ENCODE measurements at regions of chr17 and their contacts with region 1.

Region 1: GRCh38 chr17:43316522-43317142 is 82.2 kb upstream of the ARL4D start:
- DNase-seq: peak; percentile 39
- ATAC-seq: no peak
- H3K4me3 Mint-ChIP-seq: no peak overlapping the region
- H3K27ac Mint-ChIP-seq: no peak overlapping the region
- H3K4me1 Mint-ChIP-seq: peaks cover 19% of the 10 kb centered on the region
- H3K27me3 Mint-ChIP-seq: no peaks in the 10 kb centered on the region
- CTCF ChIP-seq: no peak

Region 2: DNA sequence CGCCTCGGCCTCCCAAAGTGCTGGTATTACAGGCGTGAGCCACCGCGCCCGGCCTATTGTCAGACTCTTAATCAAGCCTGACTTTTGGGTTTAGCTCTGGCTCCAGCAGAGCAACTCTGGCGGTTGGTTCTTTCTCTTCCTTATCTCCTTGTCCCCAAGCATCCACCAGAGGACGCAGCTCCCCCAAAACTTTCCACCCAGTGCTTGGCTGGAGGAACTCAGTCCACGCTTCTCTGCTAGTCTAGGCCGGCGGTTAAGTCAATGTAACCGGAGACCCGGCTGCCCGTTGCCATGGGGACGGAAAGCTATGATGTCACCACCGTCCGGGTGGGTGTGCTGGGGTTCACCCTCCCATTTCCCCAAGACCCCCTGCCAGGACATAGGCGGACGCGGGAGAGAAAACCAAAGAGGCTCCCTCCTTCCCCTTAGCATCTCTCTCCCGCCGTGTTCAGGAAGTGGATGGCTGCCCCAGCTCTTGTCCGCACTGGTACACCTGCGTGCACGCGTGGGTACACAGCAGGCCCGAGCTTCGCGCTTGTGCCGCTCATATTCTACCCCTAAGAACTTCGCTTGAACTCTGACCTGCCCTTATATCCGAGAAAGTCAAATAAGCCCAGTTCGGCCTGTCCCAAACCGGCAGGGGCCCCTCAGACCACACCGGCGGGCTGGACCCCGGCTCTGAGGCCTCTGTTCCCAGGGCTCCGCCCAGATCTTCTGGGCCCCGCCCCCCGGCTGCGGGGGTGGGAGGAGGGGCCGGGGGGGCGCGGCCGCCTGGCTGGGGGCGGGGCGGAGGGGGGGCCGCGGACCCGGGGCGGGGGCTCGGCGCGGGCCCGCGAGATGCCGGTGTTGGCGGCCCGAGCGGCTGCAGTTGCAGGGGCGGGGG is 292.0 kb before region 1 on chr17 and contains the start of gene RND2:
- CTCF ChIA-PET with region 1: no interaction called
- POLR2A ChIA-PET with region 1: interaction called, 17 read pairs
- intact Hi-C with region 1: loop called (anchors 10 kb)
- DNase-seq: peak; percentile 92
- ATAC-seq: peak; percentile 69
- H3K4me3 Mint-ChIP-seq: peak within 1 kb of the TSS; percentile 75
- H3K27ac Mint-ChIP-seq: peak within 1 kb of the TSS; percentile 53
- H3K4me1 Mint-ChIP-seq: peaks cover 25% of the 10 kb centered on the region
- H3K27me3 Mint-ChIP-seq: no peaks in the 10 kb centered on the region
- CTCF ChIP-seq: no peak
- total RNA-seq, gene RND2: not detected

Region 3: DNA sequence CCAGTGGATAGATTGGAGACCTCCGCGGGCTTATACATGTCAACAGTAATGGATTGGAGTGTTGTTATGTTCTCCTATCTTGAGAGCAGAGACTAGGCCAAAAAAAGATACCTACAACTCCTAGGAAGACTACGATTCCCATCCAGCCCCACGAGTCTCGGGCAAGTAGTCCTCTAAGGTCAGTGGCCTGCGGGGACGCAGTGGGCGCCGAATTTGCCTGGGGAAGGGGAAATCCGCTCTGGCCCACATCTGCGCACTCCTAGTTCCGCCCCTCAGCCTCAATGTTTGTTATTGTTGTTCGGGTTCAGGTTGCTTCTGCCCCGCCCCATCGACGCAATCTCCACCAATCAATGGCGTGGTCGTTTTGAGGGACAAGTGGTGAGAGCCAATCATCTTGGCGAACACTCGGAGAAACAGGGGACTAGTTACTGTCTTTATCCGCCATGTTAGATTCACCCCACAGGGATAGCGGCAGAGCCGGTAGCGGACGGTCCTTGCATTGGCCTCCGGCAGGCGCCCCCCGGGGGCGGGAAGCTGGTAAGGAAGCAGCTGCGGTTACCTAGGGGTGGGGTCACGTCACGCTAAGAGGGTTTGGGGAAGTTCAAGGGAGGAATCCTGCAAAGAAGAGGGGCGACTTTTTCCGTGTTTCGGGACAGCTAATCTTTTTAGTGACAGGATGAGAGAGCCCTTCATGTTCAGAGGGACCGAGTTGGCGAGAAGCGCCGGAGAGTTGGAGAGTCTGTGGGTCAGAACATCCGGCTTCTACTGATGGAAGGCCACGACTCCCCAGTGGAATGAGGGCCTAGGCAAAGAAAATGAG is 145.7 kb before region 1 on chr17 and contains the start of gene NBR1:
- CTCF ChIA-PET with region 1: interaction called, 3 read pairs
- POLR2A ChIA-PET with region 1: interaction called, 61 read pairs
- intact Hi-C with region 1: no loop called
- DNase-seq: peak; percentile 99
- ATAC-seq: peak; percentile 85
- H3K4me3 Mint-ChIP-seq: no peak within 1 kb of the TSS
- H3K27ac Mint-ChIP-seq: no peak within 1 kb of the TSS
- H3K4me1 Mint-ChIP-seq: peaks cover 33% of the 10 kb centered on the region
- H3K27me3 Mint-ChIP-seq: no peaks in the 10 kb centered on the region
- CTCF ChIP-seq: no peak
- total RNA-seq, gene NBR1: 45.6 to 46.5 TPM

Region 4: GRCh38 chr17:43200127-43200526 is 116.5 kb before region 1 on chr17:
- CTCF ChIA-PET with region 1: no interaction called
- POLR2A ChIA-PET with region 1: interaction called, 16 read pairs
- intact Hi-C with region 1: no loop called
- DNase-seq: peak; percentile 48
- ATAC-seq: peak; percentile 77
- H3K4me3 Mint-ChIP-seq: no peak overlapping the region
- H3K27ac Mint-ChIP-seq: peak overlapping the region; percentile 76
- H3K4me1 Mint-ChIP-seq: peaks cover 9% of the 10 kb centered on the region
- H3K27me3 Mint-ChIP-seq: no peaks in the 10 kb centered on the region
- CTCF ChIP-seq: no peak

Region 5: GRCh38 chr17:43338886-43339516 is 22.4 kb after region 1 on chr17:
- CTCF ChIA-PET with region 1: no interaction called
- POLR2A ChIA-PET with region 1: interaction called, 12 read pairs
- intact Hi-C with region 1: no loop called
- DNase-seq: peak; percentile 83
- ATAC-seq: no peak
- H3K4me3 Mint-ChIP-seq: no peak overlapping the region
- H3K27ac Mint-ChIP-seq: no peak overlapping the region
- H3K4me1 Mint-ChIP-seq: peaks cover 41% of the 10 kb centered on the region
- H3K27me3 Mint-ChIP-seq: no peaks in the 10 kb centered on the region
- CTCF ChIP-seq: peak; percentile 88

Region 6: DNA sequence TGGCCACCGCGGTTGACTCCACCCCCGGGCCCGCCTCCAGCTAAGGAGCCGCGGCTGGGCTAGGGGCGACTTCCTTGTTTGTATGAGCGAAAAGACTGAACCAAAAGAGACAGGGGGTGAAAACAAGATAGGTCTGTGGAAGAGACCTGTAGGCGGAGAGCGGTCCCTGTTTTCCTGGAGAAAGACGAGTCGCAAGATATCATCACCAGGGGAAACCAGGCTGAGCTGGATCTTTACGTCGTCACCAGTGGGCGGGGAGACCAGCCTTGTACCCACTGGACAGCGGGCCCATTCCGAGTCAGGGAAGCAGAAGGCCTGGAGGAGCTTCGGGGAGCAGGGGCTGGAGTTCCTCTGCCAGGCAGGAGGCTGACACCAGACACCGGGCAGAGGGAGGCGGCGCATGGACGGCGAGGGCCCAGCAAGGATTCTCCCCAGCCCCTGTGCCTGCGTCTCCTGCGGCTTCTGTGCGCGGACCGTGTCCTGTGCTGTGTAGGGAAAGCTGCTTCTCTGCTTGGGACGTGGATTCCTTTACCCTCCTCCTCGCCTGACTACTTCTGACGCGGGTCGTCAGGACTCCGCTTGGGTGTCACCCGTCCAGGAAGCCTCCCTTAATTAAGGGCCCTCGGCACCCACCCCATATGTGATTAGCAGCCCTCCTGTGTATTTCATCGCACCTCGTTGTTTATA is 71.9 kb after region 1 on chr17:
- CTCF ChIA-PET with region 1: no interaction called
- POLR2A ChIA-PET with region 1: interaction called, 10 read pairs
- intact Hi-C with region 1: no loop called
- DNase-seq: peak; percentile 94
- ATAC-seq: peak; percentile 76
- H3K4me3 Mint-ChIP-seq: peak overlapping the region; percentile 82
- H3K27ac Mint-ChIP-seq: peak overlapping the region; percentile 99
- H3K4me1 Mint-ChIP-seq: peaks cover 5% of the 10 kb centered on the region
- H3K27me3 Mint-ChIP-seq: no peaks in the 10 kb centered on the region
- CTCF ChIP-seq: no peak

Region 7: DNA sequence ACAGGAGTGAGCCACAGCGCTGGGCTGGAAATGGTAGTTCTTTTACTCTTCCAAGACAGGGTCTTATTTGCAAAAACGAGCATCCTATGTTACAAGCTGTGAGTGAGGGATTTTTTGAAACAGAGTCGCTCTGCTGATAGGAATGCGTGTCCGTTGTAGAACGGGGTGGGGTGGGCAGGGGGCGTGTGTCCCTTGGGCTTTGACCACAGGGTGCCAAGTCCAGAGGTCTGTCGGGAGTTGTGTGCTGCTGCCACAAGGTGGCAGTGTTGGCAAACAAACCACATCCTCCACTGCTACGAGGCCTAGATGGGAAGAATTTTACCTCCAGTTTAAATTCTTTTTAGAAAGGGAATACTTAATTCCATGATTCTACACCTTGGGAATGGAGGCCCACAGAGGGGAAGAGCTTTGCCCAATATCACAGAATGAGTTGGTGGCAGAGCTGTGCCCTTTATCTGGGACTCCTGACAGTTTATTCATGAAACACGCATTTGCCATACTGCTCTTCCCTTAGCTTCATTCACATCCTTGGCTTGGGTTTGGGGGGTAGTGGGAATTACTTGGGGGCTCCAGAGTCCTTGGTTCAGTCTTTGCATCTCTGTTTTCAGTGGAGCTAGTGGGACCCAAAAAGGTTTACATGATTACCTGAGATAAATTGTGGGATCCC is 260.1 kb after region 1 on chr17:
- CTCF ChIA-PET with region 1: no interaction called
- POLR2A ChIA-PET with region 1: no interaction called
- intact Hi-C with region 1: no loop called
- DNase-seq: peak; percentile 73
- ATAC-seq: peak; percentile 77
- H3K4me3 Mint-ChIP-seq: no peak overlapping the region
- H3K27ac Mint-ChIP-seq: no peak overlapping the region
- H3K4me1 Mint-ChIP-seq: peaks cover 12% of the 10 kb centered on the region
- H3K27me3 Mint-ChIP-seq: peaks cover 2% of the 10 kb centered on the region
- CTCF ChIP-seq: peak; percentile 92